Mammary epithelial cell (primary cell): ENCODE measurements at regions of chr3 and their contacts with region 1.

Region 1: GRCh38 chr3:139588450-139588849 is 48.9 kb upstream of the RBP1 start:
- DNase-seq: peak; percentile 36
- H3K4me3 ChIP-seq: no peak overlapping the region
- H3K27ac ChIP-seq: no peak overlapping the region
- H3K4me1 ChIP-seq: no peaks in the 10 kb centered on the region
- H3K27me3 ChIP-seq: no peaks in the 10 kb centered on the region
- CTCF ChIP-seq: peak; percentile 38 to 66

Region 2: GRCh38 chr3:139629033-139629432 is 40.6 kb after region 1 on chr3:
- CTCF ChIA-PET with region 1: no interaction called
- dilution Hi-C with region 1: no loop called
- in situ Hi-C with region 1: no loop called
- intact Hi-C with region 1: loop called (anchors 1 kb)
- DNase-seq: peak; percentile 68
- H3K4me3 ChIP-seq: no peak overlapping the region
- H3K27ac ChIP-seq: no peak overlapping the region
- H3K4me1 ChIP-seq: peaks cover 3% of the 10 kb centered on the region
- H3K27me3 ChIP-seq: no peaks in the 10 kb centered on the region
- CTCF ChIP-seq: peak; percentile 76 to 77

Region 3: GRCh38 chr3:139695426-139696313 is 107.2 kb after region 1 on chr3:
- CTCF ChIA-PET with region 1: no interaction called
- dilution Hi-C with region 1: no loop called
- in situ Hi-C with region 1: no loop called
- intact Hi-C with region 1: loop called (anchors 5 kb)
- DNase-seq: no peak
- H3K4me3 ChIP-seq: no peak overlapping the region
- H3K27ac ChIP-seq: no peak overlapping the region
- H3K4me1 ChIP-seq: no peaks in the 10 kb centered on the region
- H3K27me3 ChIP-seq: no peaks in the 10 kb centered on the region
- CTCF ChIP-seq: no peak